ENCODE measurements at regions of chr14 and their contacts with region 1.

Region 1: DNA sequence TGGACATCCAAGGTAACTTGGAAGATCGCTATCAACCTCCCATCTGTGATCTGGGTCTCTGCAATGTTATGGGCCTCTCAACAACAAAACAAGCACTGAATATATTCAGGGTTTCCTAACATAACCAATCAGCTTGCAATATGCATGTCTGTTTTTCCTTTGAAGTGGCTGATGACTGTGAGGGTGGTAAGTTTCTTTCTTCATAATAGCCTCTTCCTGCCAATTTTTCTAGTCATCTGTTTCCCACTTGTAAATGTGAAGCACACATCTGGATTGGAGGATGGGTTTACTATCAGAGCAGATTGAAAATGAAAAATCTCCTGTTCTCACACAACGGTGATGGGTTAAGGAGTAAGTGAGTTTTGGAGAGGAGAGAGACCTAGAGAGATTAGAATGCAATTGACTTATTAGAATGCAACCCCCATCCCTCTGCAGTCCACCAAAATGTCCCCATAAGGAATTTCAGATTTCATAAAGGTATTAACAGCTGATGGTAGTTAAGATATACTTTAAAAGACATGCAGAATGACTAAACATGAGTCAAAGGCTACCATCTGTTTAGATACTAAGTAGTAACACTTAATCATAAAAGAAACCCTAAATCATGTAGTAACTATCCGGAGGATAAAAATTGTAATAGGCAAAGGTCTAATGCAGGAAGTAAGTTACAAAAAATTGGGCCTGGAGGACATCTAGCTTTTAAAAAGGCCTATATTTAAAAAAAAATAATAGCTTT is 58.4 kb upstream of the SAV1 start:
- DNase-seq: no peak
- H3K4me3 ChIP-seq: no peak overlapping the region
- H3K27ac ChIP-seq: no peak overlapping the region
- H3K4me1 ChIP-seq: no peaks in the 10 kb centered on the region
- CTCF ChIP-seq: no peak

Region 2: GRCh38 chr14:50532502-50533240 is 193.9 kb before region 1 on chr14 and contains the start of gene MAP4K5:
- CTCF ChIA-PET with region 1: no interaction called
- POLR2A ChIA-PET with region 1: no interaction called
- intact Hi-C with region 1: no loop called
- DNase-seq: peak; percentile 93
- H3K4me3 ChIP-seq: peak within 1 kb of the TSS; percentile 89
- H3K27ac ChIP-seq: peak within 1 kb of the TSS; percentile 71
- H3K4me1 ChIP-seq: peaks cover 27% of the 10 kb centered on the region
- CTCF ChIP-seq: peak; percentile 85
- total RNA-seq, gene MAP4K5: 44.0 and 49.8 TPM in 2 replicates

Region 3: DNA sequence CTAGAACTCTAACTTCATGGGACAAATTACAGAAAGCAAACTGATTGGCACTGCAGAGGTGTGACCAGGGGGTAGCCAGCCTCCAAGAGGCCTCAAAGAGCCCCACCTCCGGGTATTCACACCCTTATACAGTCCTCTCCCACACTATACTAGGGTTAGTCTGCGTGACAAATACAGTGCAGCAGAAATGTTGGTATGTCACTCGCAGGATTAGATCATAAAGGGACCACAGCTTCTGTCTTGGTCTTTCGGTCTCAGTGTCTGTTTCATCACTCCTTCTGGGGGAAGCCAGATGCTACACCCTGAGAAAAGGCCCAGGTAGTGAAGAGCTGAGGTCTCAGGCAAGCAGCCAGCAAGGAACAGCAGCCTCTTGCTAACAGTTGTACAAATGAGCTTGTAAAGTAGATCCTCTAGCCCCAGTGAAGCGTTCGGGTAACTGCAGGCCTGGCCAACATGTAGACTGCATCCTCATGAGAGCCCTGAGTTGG is 10.4 kb after region 1 on chr14:
- CTCF ChIA-PET with region 1: no interaction called
- POLR2A ChIA-PET with region 1: interaction called, 11 read pairs
- intact Hi-C with region 1: no loop called
- DNase-seq: no peak
- H3K4me3 ChIP-seq: no peak overlapping the region
- H3K27ac ChIP-seq: no peak overlapping the region
- H3K4me1 ChIP-seq: peaks cover 5% of the 10 kb centered on the region
- CTCF ChIP-seq: no peak

Measured in OCI-LY7 (cell line).